ENCODE measurements at regions of chr10 and their contacts with region 1.

Region 1: GRCh38 chr10:88687853-88688467 is 18.1 kb upstream of the LIPK start:
- DNase-seq: peak in 1 of 2 experiments; percentile 63
- H3K4me3 ChIP-seq: no peak overlapping the region
- H3K4me1 ChIP-seq: no peaks in the 10 kb centered on the region
- H3K27me3 ChIP-seq: no peaks in the 10 kb centered on the region

Region 2: GRCh38 chr10:88810196-88810961 is 122.4 kb after region 1 on chr10:
- in situ Hi-C with region 1: loop called (anchors 25 kb)
- DNase-seq: peak; percentile 52 to 54
- H3K4me3 ChIP-seq: no peak overlapping the region
- H3K4me1 ChIP-seq: no peaks in the 10 kb centered on the region
- H3K27me3 ChIP-seq: peaks cover 10% of the 10 kb centered on the region

Region 3: GRCh38 chr10:88886557-88886956 is 198.6 kb after region 1 on chr10:
- in situ Hi-C with region 1: no loop called
- DNase-seq: no peak
- H3K4me3 ChIP-seq: no peak overlapping the region
- H3K4me1 ChIP-seq: peaks cover 31% of the 10 kb centered on the region
- H3K27me3 ChIP-seq: no peaks in the 10 kb centered on the region

Region 4: GRCh38 chr10:88979153-88979562 is 291.2 kb after region 1 on chr10:
- in situ Hi-C with region 1: no loop called
- DNase-seq: no peak
- H3K4me3 ChIP-seq: no peak overlapping the region
- H3K4me1 ChIP-seq: no peaks in the 10 kb centered on the region
- H3K27me3 ChIP-seq: no peaks in the 10 kb centered on the region